GM10248 (cell line): ENCODE measurements at regions of chr20 and their contacts with region 1.

Region 1: DNA sequence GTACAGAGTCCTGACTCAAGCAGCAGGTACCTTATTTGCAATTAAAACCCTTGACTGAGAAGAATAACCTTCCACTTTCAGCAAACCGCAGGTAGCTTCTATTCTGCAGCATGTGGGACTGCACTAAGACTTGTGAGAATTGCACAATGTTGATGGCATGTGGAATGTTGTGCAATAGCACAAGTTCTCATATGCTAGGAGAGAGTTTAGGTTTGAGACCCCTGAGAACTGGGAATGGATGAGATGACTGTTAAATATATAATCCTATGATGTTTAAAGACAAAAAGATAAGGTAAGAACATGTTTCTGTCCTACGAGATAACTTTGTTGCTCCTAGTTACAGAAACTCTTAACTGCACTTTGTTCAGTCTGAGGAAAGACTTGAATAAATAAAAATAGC is 194.6 kb downstream of the OTOR start:
- DNase-seq: no peak
- CTCF ChIP-seq: no peak

Region 2: GRCh38 chr20:16661756-16662155 is 281.0 kb before region 1 on chr20:
- CTCF ChIA-PET with region 1: no interaction called
- POLR2A ChIA-PET with region 1: no interaction called
- DNase-seq: no peak
- CTCF ChIP-seq: no peak

Region 3: GRCh38 chr20:16929756-16930155 is 13.0 kb before region 1 on chr20:
- CTCF ChIA-PET with region 1: interaction called, 11 read pairs
- POLR2A ChIA-PET with region 1: no interaction called
- DNase-seq: no peak
- CTCF ChIP-seq: no peak

Region 4: DNA sequence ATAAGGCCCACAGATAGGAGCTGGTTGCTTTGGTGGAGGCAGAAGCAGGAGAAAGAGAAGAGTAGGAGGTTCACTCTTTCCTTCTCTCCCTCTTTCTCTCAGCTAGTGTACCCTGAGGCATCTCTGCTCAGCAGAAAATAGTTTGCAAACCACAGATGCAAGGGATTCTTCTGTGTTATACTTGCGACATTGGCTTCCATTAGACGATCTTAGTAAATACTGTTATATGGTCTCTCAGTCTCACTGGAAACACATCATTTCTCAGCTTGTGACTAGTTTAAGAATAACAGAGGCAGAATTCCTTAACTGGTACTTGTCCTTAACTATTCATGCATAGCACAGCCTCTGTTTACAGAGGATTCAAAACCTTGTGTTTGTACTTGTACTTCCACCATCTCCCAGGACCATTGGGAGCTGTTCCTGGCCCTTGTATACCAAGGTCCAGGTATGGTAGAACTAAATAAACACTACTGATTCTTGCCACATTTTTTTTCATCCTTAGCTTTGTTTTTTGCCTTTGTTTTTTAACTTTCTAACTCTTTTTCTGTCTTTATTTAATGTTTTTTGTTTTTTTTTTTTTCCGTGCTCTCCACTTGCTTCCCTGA is 23.6 kb after region 1 on chr20:
- CTCF ChIA-PET with region 1: no interaction called
- POLR2A ChIA-PET with region 1: no interaction called
- DNase-seq: no peak
- CTCF ChIP-seq: no peak